GM12878 (cell line): ENCODE measurements at regions of chr11 and their contacts with region 1.

Region 1: GRCh38 chr11:94171693-94172440 is 43.2 kb downstream of the PANX1 start:
- DNase-seq: no peak
- ATAC-seq: peak; percentile 91
- H3K4me3 ChIP-seq: no peak overlapping the region
- H3K27ac ChIP-seq: no peak overlapping the region
- H3K4me1 ChIP-seq: no peaks in the 10 kb centered on the region
- H3K27me3 ChIP-seq: no peaks in the 10 kb centered on the region
- CTCF ChIP-seq: peak; percentile 62 to 84 (median 79)
- EP300 ChIP-seq: no peak
- POLR2A ChIP-seq: no peak
- RAD21 ChIP-seq: peak; percentile 75

Region 2: DNA sequence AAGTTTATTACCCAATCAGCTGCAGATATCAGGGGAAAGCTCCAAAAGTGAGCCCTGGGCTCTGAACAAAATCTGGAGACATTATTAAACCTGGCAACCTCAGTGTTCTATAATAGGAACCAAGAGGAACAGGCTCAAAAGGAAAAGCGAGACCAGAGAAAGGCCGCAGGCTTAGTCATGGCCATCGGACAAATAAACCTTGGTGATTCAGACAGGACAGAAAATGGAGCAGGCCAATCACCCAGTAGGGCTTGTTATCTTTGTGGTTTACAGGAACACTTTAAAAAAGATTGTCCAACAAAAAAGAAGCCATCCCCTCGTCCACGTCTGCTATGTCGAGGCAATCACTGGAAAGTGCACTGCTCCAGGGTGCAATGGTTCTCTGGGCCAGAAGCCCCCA is 50.9 kb before region 1 on chr11:
- CTCF ChIA-PET with region 1: no interaction called
- POLR2A ChIA-PET with region 1: no interaction called
- RAD21 ChIA-PET with region 1: no interaction called
- SMC1A ChIA-PET with region 1: no interaction called
- in situ Hi-C with region 1: no loop called
- intact Hi-C with region 1: no loop called
- DNase-seq: no peak
- ATAC-seq: no peak
- H3K4me3 ChIP-seq: no peak overlapping the region
- H3K27ac ChIP-seq: no peak overlapping the region
- H3K4me1 ChIP-seq: no peaks in the 10 kb centered on the region; the same call in 1 of the 2 replicates
- H3K27me3 ChIP-seq: no peaks in the 10 kb centered on the region
- CTCF ChIP-seq: no peak
- EP300 ChIP-seq: no peak
- POLR2A ChIP-seq: no peak
- RAD21 ChIP-seq: no peak

Region 3: GRCh38 chr11:94211261-94211830 is 39.5 kb after region 1 on chr11:
- CTCF ChIA-PET with region 1: no interaction called
- POLR2A ChIA-PET with region 1: no interaction called
- RAD21 ChIA-PET with region 1: no interaction called
- SMC1A ChIA-PET with region 1: no interaction called
- in situ Hi-C with region 1: no loop called
- intact Hi-C with region 1: loop called (anchors 1 kb)
- DNase-seq: no peak
- ATAC-seq: no peak
- H3K4me3 ChIP-seq: no peak overlapping the region
- H3K27ac ChIP-seq: no peak overlapping the region
- H3K4me1 ChIP-seq: no peaks in the 10 kb centered on the region
- H3K27me3 ChIP-seq: no peaks in the 10 kb centered on the region
- CTCF ChIP-seq: no peak
- EP300 ChIP-seq: no peak
- POLR2A ChIP-seq: no peak
- RAD21 ChIP-seq: no peak

Region 4: GRCh38 chr11:94417386-94417987 is 245.6 kb after region 1 on chr11:
- CTCF ChIA-PET with region 1: no interaction called
- POLR2A ChIA-PET with region 1: no interaction called
- RAD21 ChIA-PET with region 1: no interaction called
- SMC1A ChIA-PET with region 1: no interaction called
- in situ Hi-C with region 1: loop called (anchors 10 kb)
- intact Hi-C with region 1: no loop called
- DNase-seq: no peak
- ATAC-seq: peak; percentile 54
- H3K4me3 ChIP-seq: no peak overlapping the region
- H3K27ac ChIP-seq: no peak overlapping the region
- H3K4me1 ChIP-seq: no peaks in the 10 kb centered on the region
- H3K27me3 ChIP-seq: no peaks in the 10 kb centered on the region
- CTCF ChIP-seq: peak in 2 of 3 experiments; percentile 24 to 25; a peak in 3 of 6 replicates
- EP300 ChIP-seq: no peak
- POLR2A ChIP-seq: no peak
- RAD21 ChIP-seq: peak; percentile 74

Region 5: DNA sequence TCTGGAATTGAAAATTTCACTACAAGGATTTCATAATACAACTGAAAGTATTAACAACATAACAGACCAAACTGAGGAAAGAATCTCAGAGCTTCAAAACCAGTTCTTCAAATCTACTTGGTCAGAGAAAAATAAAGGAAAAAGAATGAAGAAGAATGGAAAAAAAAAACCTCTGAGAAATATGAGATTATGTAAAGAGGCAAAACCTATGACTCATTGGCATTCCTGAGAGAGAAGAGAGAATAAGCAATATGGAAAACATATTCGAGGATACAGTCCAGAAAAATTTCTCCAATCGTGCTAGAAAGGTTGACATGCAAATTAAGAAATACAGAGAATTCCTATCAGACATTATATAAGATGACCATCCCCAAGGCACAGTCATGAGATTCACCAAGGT is 252.8 kb after region 1 on chr11:
- CTCF ChIA-PET with region 1: interaction called, 3 read pairs
- POLR2A ChIA-PET with region 1: no interaction called
- RAD21 ChIA-PET with region 1: no interaction called
- SMC1A ChIA-PET with region 1: no interaction called
- in situ Hi-C with region 1: loop called (anchors 10 kb)
- intact Hi-C with region 1: loop called (anchors 5 kb)
- DNase-seq: no peak
- ATAC-seq: no peak
- H3K4me3 ChIP-seq: no peak overlapping the region
- H3K27ac ChIP-seq: no peak overlapping the region
- H3K4me1 ChIP-seq: no peaks in the 10 kb centered on the region
- H3K27me3 ChIP-seq: no peaks in the 10 kb centered on the region
- CTCF ChIP-seq: no peak
- EP300 ChIP-seq: no peak
- POLR2A ChIP-seq: no peak
- RAD21 ChIP-seq: no peak